Calu3 (cell line): ENCODE measurements at regions of chr6 and their contacts with region 1.

Region 1: DNA sequence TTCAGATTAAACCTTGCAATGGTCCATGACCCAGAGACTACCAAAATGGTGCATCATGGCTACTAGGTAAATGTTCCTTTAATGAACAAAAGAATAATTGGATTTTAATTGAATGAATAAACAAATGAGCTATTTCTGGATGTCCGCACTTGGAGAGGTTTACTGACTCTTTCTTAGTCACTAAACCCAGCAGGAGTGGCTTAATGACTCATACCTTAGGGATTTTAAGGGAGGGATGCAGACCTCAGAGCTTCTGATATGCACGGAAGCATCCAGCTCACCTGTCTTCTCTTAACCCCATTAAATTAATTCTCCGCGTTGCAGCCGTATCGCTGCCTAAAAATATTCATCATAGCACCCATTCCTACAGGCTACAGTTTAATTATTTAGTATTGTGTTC is 970.0 kb upstream of the SLC35B3 start:
- DNase-seq: peak; percentile 37
- H3K4me3 Mint-ChIP-seq: peak overlapping the region; percentile 48
- H3K27ac Mint-ChIP-seq: peak overlapping the region; percentile 89
- H3K4me1 Mint-ChIP-seq: peaks cover 36% of the 10 kb centered on the region
- H3K27me3 Mint-ChIP-seq: no peaks in the 10 kb centered on the region
- CTCF ChIP-seq: no peak

Region 2: DNA sequence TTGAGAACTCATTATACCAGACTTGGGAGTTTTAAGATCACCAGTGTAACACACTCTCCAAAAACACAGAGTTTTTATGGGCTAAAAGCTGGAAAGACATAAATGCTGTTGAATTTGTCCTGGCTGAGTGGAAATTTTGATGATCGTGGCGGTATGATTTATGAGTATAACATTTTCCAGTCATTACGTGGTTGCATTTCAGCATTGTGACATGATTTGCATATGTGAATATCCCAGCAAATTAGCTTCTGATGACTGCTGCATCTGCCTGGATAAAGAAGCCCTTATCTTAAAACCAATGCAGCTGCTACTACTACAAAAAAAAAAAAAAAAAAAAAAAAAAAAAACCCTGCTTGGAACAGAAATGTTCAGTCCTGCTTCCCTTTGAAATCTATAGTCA is 158.7 kb after region 1 on chr6:
- CTCF ChIA-PET with region 1: no interaction called
- intact Hi-C with region 1: no loop called
- DNase-seq: no peak
- H3K4me3 Mint-ChIP-seq: no peak overlapping the region
- H3K27ac Mint-ChIP-seq: no peak overlapping the region
- H3K4me1 Mint-ChIP-seq: no peaks in the 10 kb centered on the region
- H3K27me3 Mint-ChIP-seq: no peaks in the 10 kb centered on the region
- CTCF ChIP-seq: no peak

Region 3: DNA sequence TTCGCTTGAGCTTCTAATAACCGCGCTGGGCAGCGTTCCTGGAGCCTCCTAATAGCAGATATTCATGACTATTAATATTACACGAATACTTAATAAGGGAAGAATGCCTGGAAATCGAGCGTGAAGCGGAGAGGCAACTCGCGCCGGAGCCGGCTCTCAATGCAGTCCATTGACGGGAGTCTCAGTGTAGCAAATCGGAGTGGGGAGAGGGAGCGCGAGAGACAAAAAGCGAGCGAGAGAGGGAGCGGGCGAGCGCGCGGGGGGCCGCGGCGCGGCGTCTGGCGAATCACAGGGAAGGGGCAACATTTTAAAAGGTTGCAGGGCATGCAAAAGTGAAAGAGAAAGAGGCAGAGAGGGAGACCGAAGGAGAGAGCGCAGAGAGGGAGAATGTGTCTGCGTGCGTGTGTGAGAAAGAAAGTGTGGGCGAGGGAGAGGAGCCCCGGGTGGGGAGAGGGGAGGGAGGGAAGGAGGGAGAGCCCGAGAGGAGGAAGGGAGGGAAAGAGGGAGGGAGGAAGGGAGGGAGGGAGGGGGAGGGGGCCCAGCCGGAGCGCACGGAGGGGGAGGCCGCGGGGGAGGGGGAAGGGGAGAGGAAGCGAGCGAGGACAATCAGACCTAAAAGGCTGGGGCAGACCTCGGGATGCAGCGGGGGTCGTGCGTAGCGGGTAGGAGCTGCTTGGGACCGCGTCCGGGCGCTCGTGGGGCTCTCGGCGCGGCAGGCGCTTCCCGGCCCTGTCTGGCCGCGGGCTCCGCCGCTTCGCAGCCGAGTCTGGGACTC is 1006.8 kb after region 1 on chr6:
- CTCF ChIA-PET with region 1: no interaction called
- intact Hi-C with region 1: loop called (anchors 5 kb)
- DNase-seq: peak; percentile 75
- H3K4me3 Mint-ChIP-seq: peak overlapping the region; percentile 92
- H3K27ac Mint-ChIP-seq: peak overlapping the region; percentile 99
- H3K4me1 Mint-ChIP-seq: peaks cover 1% of the 10 kb centered on the region
- H3K27me3 Mint-ChIP-seq: no peaks in the 10 kb centered on the region
- CTCF ChIP-seq: no peak